HepG2 (cell line): ENCODE measurements at regions of chr14 and their contacts with region 1.

Region 1: GRCh38 chr14:19878029-19878642 is 3.2 kb downstream of the OR4K2 start:
- DNase-seq: peak; percentile 30
- ATAC-seq: no peak
- H3K4me3 ChIP-seq: no peak overlapping the region
- H3K27ac ChIP-seq: no peak overlapping the region
- H3K4me1 ChIP-seq: peaks cover 8% of the 10 kb centered on the region; the same call in 1 of the 2 replicates
- H3K27me3 ChIP-seq: no peaks in the 10 kb centered on the region
- CTCF ChIP-seq: peak; percentile 44
- EP300 ChIP-seq: no peak
- POLR2A ChIP-seq: no peak
- RAD21 ChIP-seq: no peak

Region 2: DNA sequence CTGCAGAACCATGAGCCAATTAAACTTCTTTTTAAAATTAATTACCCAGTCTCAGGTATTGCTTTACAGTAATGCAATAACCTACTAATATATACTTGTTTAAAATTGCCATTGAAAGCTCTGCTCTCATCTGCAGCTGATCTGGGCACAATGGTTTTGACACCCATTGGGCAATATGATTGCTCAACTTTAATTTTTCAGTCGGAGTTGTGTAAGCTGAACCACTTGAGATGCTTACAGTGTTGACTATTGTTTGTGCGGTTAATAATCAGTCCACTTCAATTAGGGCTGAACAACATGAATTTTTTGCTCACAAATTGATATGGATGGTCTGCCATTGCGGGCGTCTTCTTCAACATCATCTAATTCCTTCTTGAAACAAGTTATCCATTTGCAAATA is 24.3 kb after region 1 on chr14:
- CTCF ChIA-PET with region 1: no interaction called
- POLR2A ChIA-PET with region 1: no interaction called
- in situ Hi-C with region 1: no loop called
- intact Hi-C with region 1: no loop called
- DNase-seq: no peak
- ATAC-seq: no peak
- H3K4me3 ChIP-seq: no peak overlapping the region
- H3K27ac ChIP-seq: no peak overlapping the region
- H3K4me1 ChIP-seq: no peaks in the 10 kb centered on the region
- H3K27me3 ChIP-seq: no peaks in the 10 kb centered on the region
- CTCF ChIP-seq: no peak
- EP300 ChIP-seq: no peak
- POLR2A ChIP-seq: no peak
- RAD21 ChIP-seq: no peak

Region 3: GRCh38 chr14:19920021-19920657 is 42.0 kb after region 1 on chr14 and contains the start of gene OR4K5:
- CTCF ChIA-PET with region 1: no interaction called
- POLR2A ChIA-PET with region 1: no interaction called
- in situ Hi-C with region 1: no loop called
- intact Hi-C with region 1: loop called (anchors 10 kb)
- DNase-seq: no peak
- ATAC-seq: no peak
- H3K4me3 ChIP-seq: no peak within 1 kb of the TSS
- H3K27ac ChIP-seq: no peak within 1 kb of the TSS
- H3K4me1 ChIP-seq: no peaks in the 10 kb centered on the region
- H3K27me3 ChIP-seq: no peaks in the 10 kb centered on the region
- CTCF ChIP-seq: no peak
- EP300 ChIP-seq: no peak
- POLR2A ChIP-seq: no peak
- RAD21 ChIP-seq: no peak
- total RNA-seq, gene OR4K5: not detected in 2 replicates

Region 4: DNA sequence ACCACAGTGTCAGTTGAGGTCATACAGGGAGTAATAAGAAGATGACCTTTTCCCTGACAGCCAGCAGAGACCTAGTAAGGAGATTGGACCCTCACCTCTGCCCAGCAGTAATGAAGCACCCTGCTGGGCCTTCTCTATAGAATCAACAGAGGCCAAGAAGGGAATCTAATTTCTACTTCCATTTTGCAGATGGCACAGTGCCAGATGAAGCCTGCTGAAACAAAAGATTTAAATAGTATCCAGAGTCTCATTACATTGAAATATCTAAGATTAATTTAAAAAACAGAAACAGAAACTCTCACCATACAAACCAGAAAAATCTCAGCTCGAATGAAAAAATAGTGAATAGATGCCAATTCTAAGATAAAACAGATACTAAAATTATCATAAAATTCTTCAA is 129.4 kb after region 1 on chr14:
- CTCF ChIA-PET with region 1: no interaction called
- POLR2A ChIA-PET with region 1: no interaction called
- in situ Hi-C with region 1: no loop called
- intact Hi-C with region 1: no loop called
- DNase-seq: no peak
- ATAC-seq: no peak
- H3K4me3 ChIP-seq: no peak overlapping the region
- H3K27ac ChIP-seq: no peak overlapping the region
- H3K4me1 ChIP-seq: no peaks in the 10 kb centered on the region
- H3K27me3 ChIP-seq: no peaks in the 10 kb centered on the region; a peak in 1 of 5 replicates
- CTCF ChIP-seq: no peak
- EP300 ChIP-seq: no peak
- POLR2A ChIP-seq: no peak
- RAD21 ChIP-seq: no peak